ENCODE measurements at regions of chr13 and their contacts with region 1.

Region 1: GRCh38 chr13:29935309-29935981 is 85.0 kb upstream of the UBL3 start:
- DNase-seq: peak; percentile 81
- H3K4me3 Mint-ChIP-seq: peak overlapping the region; percentile 67
- H3K27ac Mint-ChIP-seq: peak overlapping the region; percentile 56
- H3K4me1 Mint-ChIP-seq: peaks cover 42% of the 10 kb centered on the region
- H3K27me3 Mint-ChIP-seq: peaks cover 5% of the 10 kb centered on the region

Region 2: GRCh38 chr13:29543230-29544215 is 391.9 kb before region 1 on chr13:
- intact Hi-C with region 1: no loop called
- DNase-seq: no peak
- H3K4me3 Mint-ChIP-seq: no peak overlapping the region
- H3K27ac Mint-ChIP-seq: peak overlapping the region; percentile 89
- H3K4me1 Mint-ChIP-seq: peaks cover 35% of the 10 kb centered on the region
- H3K27me3 Mint-ChIP-seq: no peaks in the 10 kb centered on the region

Region 3: GRCh38 chr13:29758531-29759114 is 176.8 kb before region 1 on chr13:
- intact Hi-C with region 1: loop called (anchors 10 kb)
- DNase-seq: peak; percentile 35
- H3K4me3 Mint-ChIP-seq: no peak overlapping the region
- H3K27ac Mint-ChIP-seq: peak overlapping the region; percentile 56
- H3K4me1 Mint-ChIP-seq: peaks cover 17% of the 10 kb centered on the region
- H3K27me3 Mint-ChIP-seq: peaks cover 8% of the 10 kb centered on the region

Region 4: GRCh38 chr13:29954082-29955028 is 18.9 kb after region 1 on chr13:
- intact Hi-C with region 1: loop called (anchors 2 kb)
- DNase-seq: no peak
- H3K4me3 Mint-ChIP-seq: peak overlapping the region; percentile 71
- H3K27ac Mint-ChIP-seq: peak overlapping the region; percentile 83
- H3K4me1 Mint-ChIP-seq: peaks cover 30% of the 10 kb centered on the region
- H3K27me3 Mint-ChIP-seq: peaks cover 11% of the 10 kb centered on the region

Region 5: GRCh38 chr13:30045916-30046704 is 110.7 kb after region 1 on chr13:
- intact Hi-C with region 1: loop called (anchors 10 kb)
- DNase-seq: no peak
- H3K4me3 Mint-ChIP-seq: no peak overlapping the region
- H3K27ac Mint-ChIP-seq: no peak overlapping the region
- H3K4me1 Mint-ChIP-seq: peaks cover 45% of the 10 kb centered on the region
- H3K27me3 Mint-ChIP-seq: peaks cover under 1% of the 10 kb centered on the region